Ascending aorta (tissue), 2 donors: ENCODE measurements at regions of chr9 and their contacts with region 1.

Region 1: GRCh38 chr9:128723866-128724743 is at the start of gene ZDHHC12:
- DNase-seq: peak; percentile 93 to 97
- H3K4me3 ChIP-seq: peak within 1 kb of the TSS; percentile 58 to 70
- H3K27ac ChIP-seq: peak within 1 kb of the TSS; percentile 80 to 82
- H3K4me1 ChIP-seq: no peaks in the 10 kb centered on the region
- H3K27me3 ChIP-seq: no peaks in the 10 kb centered on the region
- CTCF ChIP-seq: no peak
- total RNA-seq, gene ZDHHC12: 49.6 TPM

Region 2: GRCh38 chr9:128244837-128245231 is 479.3 kb before region 1 on chr9:
- intact Hi-C with region 1: no loop called
- DNase-seq: peak in 1 of 2 donors; percentile 78
- H3K4me3 ChIP-seq: peak overlapping the region in 1 of 2 donors; percentile 44
- H3K27ac ChIP-seq: peak overlapping the region in 1 of 2 donors; percentile 30
- H3K4me1 ChIP-seq: no peaks in the 10 kb centered on the region
- H3K27me3 ChIP-seq: peaks cover 6% of the 10 kb centered on the region
- CTCF ChIP-seq: no peak

Region 3: DNA sequence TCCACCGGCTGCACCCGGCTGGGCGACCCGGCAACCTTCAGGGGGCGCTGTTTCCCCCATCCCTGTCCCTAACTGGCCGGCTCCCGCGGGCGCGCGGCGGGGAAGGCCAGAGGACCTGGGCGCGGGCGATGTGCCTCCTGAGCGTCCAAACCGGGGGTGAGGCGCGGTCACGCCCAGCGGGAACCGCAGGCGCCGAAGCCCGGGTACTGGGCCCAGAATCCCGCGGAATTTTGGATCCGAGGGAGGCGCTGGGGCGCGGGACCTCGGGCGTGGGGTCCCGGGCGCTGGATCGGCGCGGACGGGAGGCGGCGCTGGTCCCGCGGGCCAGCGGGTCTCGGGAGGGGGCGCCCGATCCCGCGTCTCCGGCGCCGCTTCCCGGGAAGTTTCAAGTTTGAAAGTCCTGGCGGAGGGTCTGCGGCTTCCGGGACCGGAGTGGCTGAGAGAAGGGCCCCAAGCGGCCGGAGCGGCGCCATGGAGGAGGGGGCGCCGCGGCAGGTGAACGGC is 21.6 kb before region 1 on chr9 and contains the start of gene PKN3:
- intact Hi-C with region 1: loop called (anchors 1 kb)
- DNase-seq: peak in 1 of 2 donors; percentile 90
- H3K4me3 ChIP-seq: peak within 1 kb of the TSS; percentile 82 to 94
- H3K27ac ChIP-seq: peak within 1 kb of the TSS; percentile 49 to 73
- H3K4me1 ChIP-seq: peaks cover 0 to 8% of the 10 kb centered on the region in 2 donors
- H3K27me3 ChIP-seq: no peaks in the 10 kb centered on the region
- CTCF ChIP-seq: peak; percentile 86 to 90 (median 87)
- total RNA-seq, gene PKN3: 28.8 TPM